ENCODE measurements at regions of chr7 and their contacts with region 1.

Region 1: DNA sequence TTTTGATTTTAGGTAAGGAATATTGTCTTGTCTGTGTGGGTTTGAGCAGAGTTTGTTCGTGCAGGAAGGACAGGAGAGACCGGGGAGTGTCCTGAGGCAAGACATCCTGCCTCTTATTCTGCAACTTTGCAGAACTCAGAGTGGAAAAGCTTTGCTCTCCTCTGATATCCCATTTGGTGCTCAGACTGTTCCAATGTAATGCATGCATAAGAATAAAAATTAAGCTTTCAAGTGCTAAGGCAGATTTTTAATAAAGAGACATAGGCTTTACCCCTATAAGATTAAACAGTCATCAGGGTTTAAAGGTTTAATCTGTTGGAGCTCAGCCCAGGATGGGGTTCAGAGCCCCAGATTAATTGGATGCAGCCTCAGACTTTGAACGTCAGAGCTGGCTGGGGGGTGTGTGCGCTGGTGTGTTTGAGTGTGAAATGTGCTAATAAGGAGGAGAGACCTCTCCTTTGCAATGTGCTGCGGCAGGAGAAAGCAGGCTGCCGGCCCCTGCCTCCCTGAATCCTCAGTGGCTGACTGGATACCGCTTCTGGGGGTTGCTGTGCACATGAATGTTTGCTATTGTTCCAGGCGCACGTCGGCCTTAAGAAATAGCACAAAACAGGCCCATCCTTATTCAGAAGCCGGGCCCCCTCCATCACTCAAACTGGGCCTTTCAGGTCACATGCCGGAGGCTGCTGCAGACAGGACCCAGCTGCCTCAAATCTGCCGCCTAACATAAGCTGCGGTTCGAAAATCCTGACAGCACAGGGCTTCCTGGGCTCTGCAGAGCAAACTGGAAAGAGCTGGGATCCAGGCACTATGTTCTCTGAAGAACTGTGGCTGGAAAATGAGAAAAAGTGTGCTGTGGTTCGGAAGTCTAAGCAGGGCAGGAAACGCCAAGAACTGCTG is 84.1 kb upstream of the PRR15 start:
- DNase-seq: no peak
- H3K4me3 ChIP-seq: no peak overlapping the region
- H3K4me3 Mint-ChIP-seq: no peak overlapping the region
- H3K27ac Mint-ChIP-seq: peak overlapping the region; percentile 36
- H3K4me1 ChIP-seq: peaks cover 6% of the 10 kb centered on the region
- H3K4me1 Mint-ChIP-seq: peaks cover 15% of the 10 kb centered on the region
- H3K27me3 ChIP-seq: no peaks in the 10 kb centered on the region
- H3K27me3 Mint-ChIP-seq: no peaks in the 10 kb centered on the region
- CTCF ChIP-seq: no peak

Region 2: GRCh38 chr7:29598628-29599425 is 119.3 kb after region 1 on chr7:
- CTCF ChIA-PET with region 1: no interaction called
- POLR2A ChIA-PET with region 1: no interaction called
- intact Hi-C with region 1: no loop called
- DNase-seq: no peak
- H3K4me3 ChIP-seq: no peak overlapping the region
- H3K4me3 Mint-ChIP-seq: no peak overlapping the region
- H3K27ac Mint-ChIP-seq: no peak overlapping the region
- H3K4me1 ChIP-seq: peaks cover 1% of the 10 kb centered on the region; the same call in 1 of the 2 replicates
- H3K4me1 Mint-ChIP-seq: no peaks in the 10 kb centered on the region
- H3K27me3 ChIP-seq: no peaks in the 10 kb centered on the region
- H3K27me3 Mint-ChIP-seq: no peaks in the 10 kb centered on the region
- CTCF ChIP-seq: no peak

Region 3: DNA sequence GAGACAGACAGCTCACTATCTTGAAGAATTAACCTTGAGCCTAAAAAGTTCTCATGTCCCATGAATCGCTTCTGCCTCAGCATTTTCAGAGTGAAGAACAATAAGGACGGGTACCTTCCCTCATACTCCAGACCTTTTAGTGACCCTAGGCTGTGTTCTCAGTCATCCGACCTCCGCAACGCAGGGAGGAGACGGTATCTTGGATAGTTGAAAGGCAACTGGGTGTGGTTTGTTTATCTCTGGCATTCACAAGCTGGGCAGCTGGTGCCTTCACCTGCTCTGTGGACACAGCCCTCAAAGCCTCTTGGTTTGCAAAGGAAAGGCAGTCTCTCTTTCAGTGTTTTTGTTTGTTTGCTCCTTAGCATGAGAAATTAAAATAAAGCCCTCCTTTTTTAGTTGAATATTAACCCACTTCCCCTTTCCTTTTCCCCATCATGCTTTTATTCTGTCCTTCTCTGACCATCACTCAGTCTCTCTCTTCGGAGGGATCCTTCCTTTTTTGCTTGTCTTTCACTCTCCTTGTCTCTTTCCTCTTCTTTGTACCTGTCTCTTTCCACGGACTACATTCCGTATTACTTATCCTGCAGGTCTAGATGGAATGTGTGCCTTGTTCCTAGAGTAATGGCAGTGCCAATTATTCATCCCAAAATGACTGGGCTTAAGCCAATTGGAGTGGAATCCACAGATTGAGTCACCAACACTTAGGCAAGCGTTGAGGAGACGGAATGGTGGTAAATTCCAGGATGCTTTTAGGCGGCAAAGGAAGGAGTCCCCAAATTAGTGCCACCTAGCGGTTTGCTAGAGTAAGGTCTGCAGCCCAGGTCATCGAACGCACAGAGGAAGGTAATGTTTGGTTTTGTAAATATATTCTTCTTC is 129.8 kb after region 1 on chr7:
- CTCF ChIA-PET with region 1: no interaction called
- POLR2A ChIA-PET with region 1: no interaction called
- intact Hi-C with region 1: loop called (anchors 5 kb)
- DNase-seq: peak; percentile 71 to 82
- H3K4me3 ChIP-seq: 0 out of 2 replicates have a peak overlapping the region, but pooled peaks have one; percentile 10
- H3K4me3 Mint-ChIP-seq: peak overlapping the region; percentile 73
- H3K27ac Mint-ChIP-seq: peak overlapping the region; percentile 84
- H3K4me1 ChIP-seq: peaks cover 46% of the 10 kb centered on the region
- H3K4me1 Mint-ChIP-seq: peaks cover 44% of the 10 kb centered on the region
- H3K27me3 ChIP-seq: no peaks in the 10 kb centered on the region
- H3K27me3 Mint-ChIP-seq: no peaks in the 10 kb centered on the region
- CTCF ChIP-seq: peak; percentile 75

Measured in Caco-2 (cell line).